PC-3 (cell line): ENCODE measurements at regions of chr10 and their contacts with region 1.

Region 1: DNA sequence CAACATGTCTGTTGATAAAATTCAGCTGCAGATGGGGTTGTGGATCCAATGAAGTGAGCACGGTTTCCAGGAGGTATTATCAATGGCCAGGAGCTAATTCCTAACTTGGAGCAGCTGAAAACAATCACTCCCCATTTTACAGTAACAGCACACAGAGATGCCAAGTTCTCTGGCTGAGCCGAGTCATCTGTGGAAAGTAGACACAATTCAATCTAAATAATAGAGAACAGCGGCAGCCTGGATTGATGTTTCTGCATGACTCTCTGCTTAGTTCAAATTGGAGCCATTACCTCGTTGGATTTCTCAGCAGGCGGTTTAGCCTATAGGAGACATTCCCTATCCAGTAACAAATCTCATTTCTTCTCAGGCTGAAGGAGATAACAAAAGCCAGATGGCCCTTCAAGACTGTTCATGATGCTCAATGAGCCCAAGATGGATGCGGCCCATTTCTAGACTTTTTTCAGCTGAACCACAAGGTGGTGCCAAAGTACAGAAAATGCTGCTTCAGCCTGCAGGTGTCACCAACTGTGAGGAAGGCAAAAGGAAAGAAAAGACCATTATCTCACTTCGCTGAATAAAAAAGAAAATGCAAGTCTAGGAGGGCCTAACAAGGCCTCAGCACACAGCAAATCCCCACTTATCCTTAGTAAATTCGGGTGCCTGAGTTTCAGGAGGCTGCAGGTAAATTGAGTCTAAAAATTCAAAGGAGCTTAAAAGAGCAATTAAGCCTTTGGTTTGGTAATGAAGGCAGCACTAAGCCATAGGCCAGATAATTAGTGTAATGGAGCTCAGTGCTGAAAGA is 83.7 kb downstream of the SLC16A9 start:
- DNase-seq: peak; percentile 95
- ATAC-seq: peak; percentile 82
- H3K4me3 ChIP-seq: peak overlapping the region; percentile 8; the same call in 1 of the 2 replicates
- H3K27ac ChIP-seq: no peak overlapping the region
- H3K4me1 ChIP-seq: peaks cover 35% of the 10 kb centered on the region
- H3K27me3 ChIP-seq: no peaks in the 10 kb centered on the region
- CTCF ChIP-seq: peak; percentile 99

Region 2: DNA sequence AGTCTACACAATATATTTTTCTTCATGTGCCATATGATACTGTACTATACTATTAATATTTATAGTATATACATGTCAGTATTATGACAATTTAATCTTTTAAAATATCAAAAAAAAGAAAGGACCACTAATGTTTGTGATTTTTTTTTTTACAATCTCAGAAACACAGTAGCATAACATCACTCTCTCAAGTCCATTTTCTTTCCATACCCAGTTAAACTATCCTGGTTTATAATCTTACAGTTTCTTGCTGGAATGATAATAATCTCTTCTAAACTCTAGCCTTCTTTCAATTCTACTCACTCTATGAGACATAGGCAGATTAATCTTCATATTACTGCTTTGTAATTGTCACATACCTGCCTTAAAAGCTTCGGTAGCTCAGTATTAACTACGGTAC is 458.4 kb before region 1 on chr10:
- CTCF ChIA-PET with region 1: no interaction called
- POLR2A ChIA-PET with region 1: no interaction called
- intact Hi-C with region 1: no loop called
- DNase-seq: no peak
- ATAC-seq: no peak
- H3K4me3 ChIP-seq: no peak overlapping the region
- H3K27ac ChIP-seq: no peak overlapping the region
- H3K4me1 ChIP-seq: no peaks in the 10 kb centered on the region
- H3K27me3 ChIP-seq: peaks cover 22% of the 10 kb centered on the region; the same call in 1 of the 2 replicates
- CTCF ChIP-seq: no peak

Region 3: GRCh38 chr10:59206253-59206652 is 419.7 kb before region 1 on chr10:
- CTCF ChIA-PET with region 1: no interaction called
- POLR2A ChIA-PET with region 1: no interaction called
- intact Hi-C with region 1: no loop called
- DNase-seq: peak; percentile 26
- ATAC-seq: no peak
- H3K4me3 ChIP-seq: no peak overlapping the region
- H3K27ac ChIP-seq: no peak overlapping the region
- H3K4me1 ChIP-seq: no peaks in the 10 kb centered on the region
- H3K27me3 ChIP-seq: 0 out of 2 replicates have a peak, but pooled peaks cover 8% of the 10 kb centered on the region
- CTCF ChIP-seq: no peak

Region 4: DNA sequence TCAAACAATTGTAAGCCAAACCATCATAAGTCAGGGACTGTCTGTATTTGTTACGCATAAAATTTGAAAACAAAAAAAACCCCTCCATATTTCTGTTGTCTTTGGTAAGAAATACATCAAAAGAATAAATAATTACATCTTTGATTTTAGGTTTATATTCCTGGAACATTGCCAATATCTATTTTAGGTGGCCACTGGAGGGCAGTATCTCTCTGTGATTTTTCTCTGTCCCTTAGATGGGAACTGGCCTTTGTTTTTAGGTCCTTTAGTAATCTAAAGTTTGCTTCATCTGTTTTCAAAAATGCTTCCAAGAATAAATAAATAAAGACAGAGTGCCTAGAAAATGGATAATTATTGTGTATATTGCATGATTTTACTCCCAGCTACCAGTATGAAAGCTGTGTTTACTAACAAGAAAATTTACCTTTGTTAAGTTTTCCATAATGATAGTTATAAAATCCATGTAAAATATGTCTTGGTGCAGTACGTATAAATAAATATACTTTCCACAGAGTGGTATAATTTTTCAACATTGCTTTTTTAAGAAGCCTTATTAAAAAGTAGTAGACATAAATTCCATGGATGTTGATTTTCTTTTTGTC is 385.2 kb before region 1 on chr10:
- CTCF ChIA-PET with region 1: no interaction called
- POLR2A ChIA-PET with region 1: no interaction called
- intact Hi-C with region 1: loop called (anchors 1 kb)
- DNase-seq: peak; percentile 79
- ATAC-seq: no peak; the same call in 1 of the 2 replicates
- H3K4me3 ChIP-seq: no peak overlapping the region
- H3K27ac ChIP-seq: no peak overlapping the region
- H3K4me1 ChIP-seq: no peaks in the 10 kb centered on the region
- H3K27me3 ChIP-seq: peaks cover 19% of the 10 kb centered on the region
- CTCF ChIP-seq: peak; percentile 93

Region 5: DNA sequence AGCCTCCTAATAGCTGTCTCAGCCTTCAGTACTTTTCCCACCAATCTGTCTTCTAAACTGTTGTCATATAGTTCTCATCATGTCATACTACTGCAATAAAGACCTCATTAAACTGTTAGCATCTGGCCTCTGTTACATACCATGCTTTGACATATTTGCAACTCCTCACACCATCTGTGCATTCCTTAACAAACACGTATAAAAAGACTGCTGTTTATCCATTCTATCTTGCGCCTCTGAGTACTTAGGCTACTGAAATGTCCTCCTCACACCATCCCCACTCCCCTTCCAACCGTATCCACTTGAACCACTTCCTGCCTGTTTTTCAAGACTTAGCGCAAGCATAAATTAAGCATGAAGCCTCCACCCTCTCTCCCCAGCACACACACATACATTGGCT is 42.2 kb after region 1 on chr10:
- CTCF ChIA-PET with region 1: no interaction called
- POLR2A ChIA-PET with region 1: no interaction called
- intact Hi-C with region 1: no loop called
- DNase-seq: no peak
- ATAC-seq: no peak
- H3K4me3 ChIP-seq: no peak overlapping the region
- H3K27ac ChIP-seq: no peak overlapping the region
- H3K4me1 ChIP-seq: no peaks in the 10 kb centered on the region
- H3K27me3 ChIP-seq: no peaks in the 10 kb centered on the region
- CTCF ChIP-seq: no peak

Region 6: DNA sequence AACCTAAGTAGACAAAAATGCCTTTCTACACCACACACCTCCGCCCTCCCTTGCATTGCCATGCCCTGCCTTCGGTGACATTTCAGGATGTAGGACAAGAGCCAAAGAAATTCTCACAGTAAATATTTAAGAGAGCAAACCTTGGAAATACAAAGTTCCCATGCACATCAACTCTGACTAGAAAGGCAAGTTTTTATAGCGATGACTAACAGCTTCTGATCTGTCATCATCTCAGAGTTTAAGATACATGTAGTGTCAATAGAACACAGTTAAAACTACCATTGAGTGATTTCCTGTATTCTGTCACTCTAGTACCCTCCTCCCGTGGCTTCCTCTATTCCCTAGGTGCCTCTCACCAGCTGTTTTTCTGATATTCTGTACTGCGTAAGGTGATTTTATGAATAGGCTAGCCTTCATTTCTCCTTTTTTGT is 63.0 kb after region 1 on chr10:
- CTCF ChIA-PET with region 1: interaction called, 5 read pairs
- POLR2A ChIA-PET with region 1: no interaction called
- intact Hi-C with region 1: loop called (anchors 2 kb)
- DNase-seq: peak; percentile 100
- ATAC-seq: peak; percentile 97
- H3K4me3 ChIP-seq: peak overlapping the region; percentile 20
- H3K27ac ChIP-seq: peak overlapping the region; percentile 90
- H3K4me1 ChIP-seq: peaks cover 30% of the 10 kb centered on the region
- H3K27me3 ChIP-seq: no peaks in the 10 kb centered on the region
- CTCF ChIP-seq: no peak

Region 7: DNA sequence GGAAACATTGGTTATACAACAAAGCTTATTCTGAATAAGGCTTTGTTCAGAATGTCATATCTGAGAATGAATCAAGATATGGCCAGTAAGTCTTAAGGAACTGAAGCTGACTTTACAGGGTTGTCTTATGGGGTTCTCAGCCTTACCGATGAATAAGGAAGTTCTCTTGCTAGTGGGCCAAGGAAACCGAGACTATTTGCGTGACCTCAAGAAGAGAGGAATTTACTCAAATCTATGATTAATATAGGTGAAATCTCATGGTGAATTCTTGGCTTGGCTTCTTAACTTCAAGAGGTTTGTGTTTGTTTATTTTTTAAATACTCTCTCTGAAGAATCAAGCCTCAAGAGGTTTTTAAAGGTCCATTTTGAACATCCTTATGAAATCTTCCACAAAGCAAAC is 132.0 kb after region 1 on chr10:
- CTCF ChIA-PET with region 1: no interaction called
- POLR2A ChIA-PET with region 1: no interaction called
- intact Hi-C with region 1: loop called (anchors 1 kb)
- DNase-seq: peak; percentile 91
- ATAC-seq: peak; percentile 87
- H3K4me3 ChIP-seq: no peak overlapping the region
- H3K27ac ChIP-seq: peak overlapping the region; percentile 79
- H3K4me1 ChIP-seq: peaks cover 18% of the 10 kb centered on the region
- H3K27me3 ChIP-seq: no peaks in the 10 kb centered on the region
- CTCF ChIP-seq: no peak

Region 8: GRCh38 chr10:59830601-59831259 is 204.8 kb after region 1 on chr10:
- CTCF ChIA-PET with region 1: interaction called, 18 read pairs
- POLR2A ChIA-PET with region 1: interaction called, 6 read pairs
- intact Hi-C with region 1: loop called (anchors 1 kb)
- DNase-seq: peak; percentile 88
- ATAC-seq: peak; percentile 92
- H3K4me3 ChIP-seq: no peak overlapping the region
- H3K27ac ChIP-seq: no peak overlapping the region
- H3K4me1 ChIP-seq: no peaks in the 10 kb centered on the region
- H3K27me3 ChIP-seq: no peaks in the 10 kb centered on the region
- CTCF ChIP-seq: peak; percentile 98

Region 9: GRCh38 chr10:60048091-60048501 is 422.2 kb after region 1 on chr10:
- CTCF ChIA-PET with region 1: no interaction called
- POLR2A ChIA-PET with region 1: no interaction called
- intact Hi-C with region 1: loop called (anchors 1 kb)
- DNase-seq: peak; percentile 87
- ATAC-seq: peak; percentile 82
- H3K4me3 ChIP-seq: no peak overlapping the region
- H3K27ac ChIP-seq: no peak overlapping the region
- H3K4me1 ChIP-seq: peaks cover 15% of the 10 kb centered on the region
- H3K27me3 ChIP-seq: no peaks in the 10 kb centered on the region
- CTCF ChIP-seq: peak; percentile 90